Heart right ventricle (tissue), 16 donors: ENCODE measurements at regions of chrX and their contacts with region 1.

Region 1: GRCh38 chrX:68995780-68996551 is 167.1 kb downstream of the EFNB1 start:
- DNase-seq: peak; percentile 66 to 73
- ATAC-seq: peak; percentile 81 to 94 (median 90)
- H3K4me3 ChIP-seq: peak overlapping the region in 6 of 10 donors; percentile 6 to 29 (median 18)
- H3K27ac ChIP-seq: peak overlapping the region; percentile 22 to 81 (median 77)
- H3K4me1 ChIP-seq: peaks cover 3 to 59% (median 29%) of the 10 kb centered on the region in 9 donors
- H3K27me3 ChIP-seq: peaks cover 0 to 12% (median 0%) of the 10 kb centered on the region in 7 donors
- CTCF ChIP-seq: no peak

Region 2: DNA sequence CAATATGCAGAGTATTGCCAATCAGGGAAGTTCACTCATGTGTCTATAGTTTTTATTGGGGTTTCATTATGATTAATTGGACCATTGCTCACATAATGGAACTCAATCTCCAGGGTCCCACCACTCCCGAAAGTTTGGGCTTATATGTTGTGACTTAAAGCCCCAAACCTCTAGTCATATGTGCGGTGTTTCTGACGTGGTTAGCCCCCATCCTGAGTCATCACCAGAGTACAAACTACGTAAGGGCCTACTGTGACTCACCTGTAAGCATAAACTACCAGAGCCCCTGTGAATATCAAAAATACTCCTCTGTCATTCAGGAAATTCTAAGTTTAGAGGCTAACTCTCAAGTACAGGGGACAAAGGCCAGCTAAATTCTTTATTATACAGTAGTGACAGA is 491.7 kb before region 1 on chrX:
- intact Hi-C with region 1: no loop called
- DNase-seq: no peak
- ATAC-seq: no peak
- H3K4me3 ChIP-seq: no peak overlapping the region
- H3K27ac ChIP-seq: no peak overlapping the region
- H3K4me1 ChIP-seq: peaks cover 0 to 57% (median 26%) of the 10 kb centered on the region in 9 donors
- H3K27me3 ChIP-seq: peaks cover 0 to 15% (median 0%) of the 10 kb centered on the region in 7 donors
- CTCF ChIP-seq: no peak

Region 3: DNA sequence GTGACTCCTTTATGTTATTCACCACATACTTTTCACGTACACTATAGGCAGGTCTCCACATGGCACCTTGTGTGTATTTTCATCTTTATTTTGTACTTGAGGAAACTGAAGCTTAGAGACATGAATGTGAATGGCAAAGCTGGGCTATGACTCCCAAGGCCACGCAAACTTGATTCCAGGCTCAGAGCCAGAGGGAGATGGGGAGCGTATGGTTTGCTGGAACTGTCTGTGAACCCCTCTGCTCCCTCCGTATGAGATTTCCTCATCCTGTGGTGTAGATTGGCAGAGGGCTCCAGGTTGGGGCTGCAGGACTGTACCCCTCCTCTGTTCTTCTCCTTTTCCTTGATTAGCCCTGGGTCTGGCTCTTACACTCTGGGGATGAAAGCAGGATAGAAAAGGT is 364.6 kb before region 1 on chrX:
- intact Hi-C with region 1: no loop called
- DNase-seq: no peak
- ATAC-seq: no peak
- H3K4me3 ChIP-seq: no peak overlapping the region
- H3K27ac ChIP-seq: no peak overlapping the region
- H3K4me1 ChIP-seq: no peaks in the 10 kb centered on the region
- H3K27me3 ChIP-seq: peaks cover 0 to 36% (median 0%) of the 10 kb centered on the region in 7 donors
- CTCF ChIP-seq: no peak

Region 4: DNA sequence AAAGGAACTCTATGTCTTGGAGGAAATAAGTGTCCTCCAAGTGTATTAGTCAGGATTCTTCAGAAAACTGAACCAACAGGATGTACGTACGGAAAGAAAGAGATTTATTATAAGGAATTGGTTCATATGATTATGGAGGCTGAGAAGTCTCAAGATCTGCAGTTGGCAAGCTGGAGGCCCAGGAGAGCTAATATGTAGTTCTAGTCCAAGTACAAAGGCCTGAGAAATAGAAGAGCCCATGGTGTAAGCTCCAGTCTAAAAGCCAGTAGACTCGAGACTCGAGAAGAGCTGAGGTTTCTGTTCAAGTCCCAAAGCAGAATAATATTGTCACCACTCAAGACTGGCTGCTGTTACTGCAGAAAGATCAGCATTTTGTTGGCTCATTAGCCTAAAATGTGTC is 232.5 kb before region 1 on chrX:
- intact Hi-C with region 1: no loop called
- DNase-seq: no peak
- ATAC-seq: no peak
- H3K4me3 ChIP-seq: no peak overlapping the region
- H3K27ac ChIP-seq: no peak overlapping the region
- H3K4me1 ChIP-seq: no peaks in the 10 kb centered on the region
- H3K27me3 ChIP-seq: peaks cover 0 to 17% (median 0%) of the 10 kb centered on the region in 7 donors
- CTCF ChIP-seq: no peak

Region 5: GRCh38 chrX:68929332-68930150 is 66.4 kb before region 1 on chrX:
- intact Hi-C with region 1: loop called in 2 of 10 experiments (anchors 5 to 10 kb)
- DNase-seq: peak; percentile 29 to 46
- ATAC-seq: peak in 7 of 8 donors; percentile 56 to 79 (median 74)
- H3K4me3 ChIP-seq: no peak overlapping the region
- H3K27ac ChIP-seq: peak overlapping the region in 9 of 10 donors; percentile 14 to 83 (median 60)
- H3K4me1 ChIP-seq: peaks cover 0 to 53% (median 20%) of the 10 kb centered on the region in 9 donors
- H3K27me3 ChIP-seq: peaks cover 0 to 7% (median 0%) of the 10 kb centered on the region in 7 donors
- CTCF ChIP-seq: no peak

Region 6: DNA sequence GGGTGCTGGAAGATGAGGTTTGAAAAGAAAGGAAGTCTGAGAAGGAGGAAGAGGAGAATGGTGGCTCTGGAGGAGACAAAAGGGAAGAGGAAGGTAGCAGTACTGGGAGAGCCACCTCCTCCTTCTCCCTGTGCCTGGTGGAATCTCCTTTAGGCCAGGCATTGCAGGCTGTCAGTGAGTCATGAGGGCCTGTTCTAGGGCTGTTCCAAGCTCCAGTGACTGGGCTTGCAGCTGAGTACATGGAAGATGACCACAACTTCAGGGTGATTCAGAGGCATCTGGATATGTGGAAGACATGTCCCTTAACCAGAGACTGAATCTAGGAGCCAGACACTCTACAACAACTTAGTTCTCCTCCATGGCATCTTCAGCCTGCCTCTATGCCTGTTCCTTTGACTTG is 59.4 kb before region 1 on chrX:
- intact Hi-C with region 1: loop called in 4 of 10 experiments (anchors 2 to 10 kb)
- DNase-seq: no peak
- ATAC-seq: peak in 3 of 8 donors; percentile 32 to 53 (median 39)
- H3K4me3 ChIP-seq: no peak overlapping the region
- H3K27ac ChIP-seq: peak overlapping the region in 4 of 10 donors; percentile 26 to 49 (median 42)
- H3K4me1 ChIP-seq: peaks cover 0 to 57% (median 22%) of the 10 kb centered on the region in 9 donors
- H3K27me3 ChIP-seq: no peaks in the 10 kb centered on the region
- CTCF ChIP-seq: no peak

Region 7: GRCh38 chrX:69018416-69019072 is 22.6 kb after region 1 on chrX:
- intact Hi-C with region 1: loop called in 1 of 10 experiments (anchors 1 kb)
- DNase-seq: no peak
- ATAC-seq: peak in 2 of 8 donors; percentile 16
- H3K4me3 ChIP-seq: no peak overlapping the region
- H3K27ac ChIP-seq: no peak overlapping the region
- H3K4me1 ChIP-seq: peaks cover 0 to 55% (median 24%) of the 10 kb centered on the region in 9 donors
- H3K27me3 ChIP-seq: peaks cover 0 to 21% (median 0%) of the 10 kb centered on the region in 7 donors
- CTCF ChIP-seq: no peak

Region 8: GRCh38 chrX:69424161-69424560 is 428.2 kb after region 1 on chrX:
- intact Hi-C with region 1: no loop called
- DNase-seq: no peak
- ATAC-seq: no peak
- H3K4me3 ChIP-seq: no peak overlapping the region
- H3K27ac ChIP-seq: no peak overlapping the region
- H3K4me1 ChIP-seq: peaks cover 0 to 2% (median 0%) of the 10 kb centered on the region in 9 donors
- H3K27me3 ChIP-seq: peaks cover 0 to 13% (median 0%) of the 10 kb centered on the region in 7 donors
- CTCF ChIP-seq: peak in 8 of 9 donors; percentile 6 to 51 (median 38)